Caco-2 (cell line): ENCODE measurements at regions of chr20 and their contacts with region 1.

Region 1: GRCh38 chr20:50385733-50386640 is 124.2 kb upstream of the PTPN1 start:
- DNase-seq: no peak
- H3K4me3 ChIP-seq: no peak overlapping the region
- H3K4me3 Mint-ChIP-seq: no peak overlapping the region
- H3K27ac Mint-ChIP-seq: peak overlapping the region; percentile 10
- H3K4me1 ChIP-seq: peaks cover 59% of the 10 kb centered on the region
- H3K4me1 Mint-ChIP-seq: peaks cover 61% of the 10 kb centered on the region
- H3K27me3 ChIP-seq: no peaks in the 10 kb centered on the region
- H3K27me3 Mint-ChIP-seq: no peaks in the 10 kb centered on the region
- CTCF ChIP-seq: no peak

Region 2: GRCh38 chr20:50308513-50309279 is 77.3 kb before region 1 on chr20:
- CTCF ChIA-PET with region 1: no interaction called
- POLR2A ChIA-PET with region 1: no interaction called
- intact Hi-C with region 1: no loop called
- DNase-seq: no peak
- H3K4me3 ChIP-seq: no peak overlapping the region
- H3K4me3 Mint-ChIP-seq: no peak overlapping the region
- H3K27ac Mint-ChIP-seq: peak overlapping the region; percentile 26
- H3K4me1 ChIP-seq: peaks cover 28% of the 10 kb centered on the region
- H3K4me1 Mint-ChIP-seq: peaks cover 23% of the 10 kb centered on the region
- H3K27me3 ChIP-seq: no peaks in the 10 kb centered on the region
- H3K27me3 Mint-ChIP-seq: no peaks in the 10 kb centered on the region
- CTCF ChIP-seq: no peak

Region 3: GRCh38 chr20:50399917-50400704 is 14.1 kb after region 1 on chr20:
- CTCF ChIA-PET with region 1: interaction called, 3 read pairs
- POLR2A ChIA-PET with region 1: no interaction called
- intact Hi-C with region 1: loop called (anchors 1 kb)
- DNase-seq: peak; percentile 72 to 76
- H3K4me3 ChIP-seq: no peak overlapping the region
- H3K4me3 Mint-ChIP-seq: no peak overlapping the region
- H3K27ac Mint-ChIP-seq: peak overlapping the region; percentile 70
- H3K4me1 ChIP-seq: peaks cover 35% of the 10 kb centered on the region
- H3K4me1 Mint-ChIP-seq: peaks cover 32% of the 10 kb centered on the region
- H3K27me3 ChIP-seq: no peaks in the 10 kb centered on the region
- H3K27me3 Mint-ChIP-seq: no peaks in the 10 kb centered on the region
- CTCF ChIP-seq: no peak

Region 4: DNA sequence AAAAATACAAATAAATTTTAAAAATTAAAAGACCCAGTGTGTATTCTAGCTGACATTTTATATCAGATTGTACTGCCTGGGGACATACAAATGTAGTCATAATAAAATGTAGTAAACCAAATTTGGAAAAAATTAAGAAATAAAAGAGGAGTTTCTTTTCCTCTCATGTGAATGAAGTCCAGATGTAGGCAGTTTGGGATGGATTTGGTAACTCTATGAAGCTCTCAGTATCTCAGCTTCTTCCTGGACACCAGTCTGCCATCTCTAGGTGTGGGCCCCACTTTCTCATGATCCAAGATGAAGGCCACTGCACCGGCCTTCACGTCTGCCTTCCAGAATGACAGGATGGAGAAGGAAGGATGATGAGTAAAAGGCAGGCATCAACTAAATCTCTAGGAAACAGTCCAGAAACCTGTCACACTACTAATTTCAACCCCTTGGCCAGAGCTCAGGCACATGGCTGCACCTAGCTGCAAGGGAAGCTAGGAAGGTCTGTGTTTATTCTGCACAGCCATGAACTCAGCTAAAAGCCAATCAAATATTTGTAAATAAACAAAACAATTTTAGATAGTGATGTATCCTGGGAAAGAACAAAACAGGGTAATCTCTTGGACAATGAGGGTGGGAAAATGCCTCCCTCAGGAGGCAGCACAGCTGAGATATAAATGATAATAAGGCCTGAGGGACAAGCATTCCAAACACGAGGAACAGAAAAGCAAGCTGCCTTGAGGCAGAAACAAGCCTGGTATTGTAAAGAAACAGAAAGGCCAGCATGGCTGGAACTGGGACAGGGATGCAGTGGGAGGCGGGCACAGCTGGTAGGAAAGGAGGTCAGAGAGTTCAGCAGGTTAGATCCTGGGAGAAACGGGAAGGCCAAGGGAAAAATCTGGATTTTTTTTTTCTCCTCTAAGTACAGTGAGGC is 35.6 kb after region 1 on chr20:
- CTCF ChIA-PET with region 1: interaction called, 3 read pairs
- POLR2A ChIA-PET with region 1: no interaction called
- intact Hi-C with region 1: loop called (anchors 2 kb)
- DNase-seq: no peak
- H3K4me3 ChIP-seq: no peak overlapping the region
- H3K4me3 Mint-ChIP-seq: no peak overlapping the region
- H3K27ac Mint-ChIP-seq: peak overlapping the region; percentile 76
- H3K4me1 ChIP-seq: peaks cover 37% of the 10 kb centered on the region
- H3K4me1 Mint-ChIP-seq: peaks cover 27% of the 10 kb centered on the region
- H3K27me3 ChIP-seq: no peaks in the 10 kb centered on the region
- H3K27me3 Mint-ChIP-seq: no peaks in the 10 kb centered on the region
- CTCF ChIP-seq: no peak